K562 (cell line): ENCODE measurements at regions of chr5 and their contacts with region 1.

Region 1: DNA sequence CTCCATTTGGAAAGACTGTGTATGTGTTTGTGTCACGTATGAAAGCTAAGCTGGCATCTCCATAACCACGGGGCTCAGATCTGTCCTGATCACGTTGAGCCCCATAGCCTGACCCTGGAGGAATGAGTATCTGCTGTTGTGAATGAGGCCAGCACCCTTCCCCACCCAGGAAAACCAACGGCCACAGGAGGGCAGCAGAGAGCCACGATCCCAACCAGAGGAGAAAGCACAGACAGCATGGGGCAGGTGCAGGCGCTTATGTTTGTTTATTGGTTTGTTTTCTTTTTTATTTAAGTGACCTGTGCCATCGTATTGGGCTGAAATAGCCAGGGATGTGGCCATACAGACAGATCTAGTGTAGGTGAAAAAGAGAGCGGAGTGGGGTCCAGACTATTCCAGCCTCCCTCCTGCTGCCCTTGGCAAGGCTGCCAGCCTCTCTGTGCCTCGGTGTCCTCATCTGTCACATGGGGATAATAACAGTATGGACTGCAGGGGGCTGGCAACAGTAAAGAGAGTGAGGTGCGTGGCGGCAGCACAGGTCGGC is 12.0 kb downstream of the OR2V2 start:
- DNase-seq: peak; percentile 83 to 94 (median 84)
- ATAC-seq: peak; percentile 90
- H3K4me3 ChIP-seq: no peak overlapping the region
- H3K27ac ChIP-seq: peak overlapping the region; percentile 98; the same call in 2 of the 3 replicates
- H3K4me1 ChIP-seq: peaks cover 36 to 41% of the 10 kb centered on the region in 2 experiments
- H3K27me3 ChIP-seq: no peaks in the 10 kb centered on the region
- CTCF ChIP-seq: peak; percentile 96 to 97 (median 96)
- EP300 ChIP-seq: peak; percentile 29; the same call in 1 of the 2 replicates
- POLR2A ChIP-seq: no peak
- RAD21 ChIP-seq: peak; percentile 87 to 91

Region 2: GRCh38 chr5:180784497-180785097 is 374.8 kb before region 1 on chr5:
- CTCF ChIA-PET with region 1: no interaction called
- POLR2A ChIA-PET with region 1: interaction called, 4 read pairs
- in situ Hi-C with region 1: no loop called
- intact Hi-C with region 1: loop called (anchors 2 kb)
- DNase-seq: peak; percentile 54 to 85 (median 63)
- ATAC-seq: peak; percentile 72
- H3K4me3 ChIP-seq: no peak overlapping the region
- H3K27ac ChIP-seq: no peak overlapping the region
- H3K4me1 ChIP-seq: peaks cover 38% of the 10 kb centered on the region in 2 experiments; a peak in 4 of 5 replicates
- H3K27me3 ChIP-seq: no peaks in the 10 kb centered on the region
- CTCF ChIP-seq: peak; percentile 75 to 83 (median 76)
- EP300 ChIP-seq: no peak
- POLR2A ChIP-seq: no peak
- RAD21 ChIP-seq: peak; percentile 64 to 83

Region 3: DNA sequence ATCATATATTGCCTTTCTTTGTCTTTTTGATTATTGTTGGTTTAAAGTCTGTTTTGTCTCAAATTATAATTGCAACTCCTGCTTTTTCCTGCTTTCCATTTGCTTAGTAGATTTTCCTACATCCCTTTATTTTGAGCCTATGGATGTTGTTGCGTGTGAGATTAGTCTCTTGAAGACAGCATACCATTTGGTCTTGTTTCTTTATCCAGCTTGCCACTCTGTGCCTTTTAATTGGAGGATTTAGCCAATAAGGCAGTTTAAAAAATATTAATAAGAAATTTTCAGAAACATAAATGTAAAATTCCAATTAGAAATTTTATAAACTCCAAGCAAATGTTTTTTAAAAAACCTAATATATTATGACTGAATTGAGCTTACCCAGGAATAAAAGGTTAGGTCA is 236.4 kb before region 1 on chr5:
- CTCF ChIA-PET with region 1: no interaction called
- POLR2A ChIA-PET with region 1: no interaction called
- in situ Hi-C with region 1: no loop called
- intact Hi-C with region 1: no loop called
- DNase-seq: no peak
- ATAC-seq: no peak
- H3K4me3 ChIP-seq: no peak overlapping the region
- H3K27ac ChIP-seq: no peak overlapping the region
- H3K4me1 ChIP-seq: no peaks in the 10 kb centered on the region; a peak in 1 of 5 replicates
- H3K27me3 ChIP-seq: no peaks in the 10 kb centered on the region
- CTCF ChIP-seq: no peak
- EP300 ChIP-seq: no peak
- POLR2A ChIP-seq: no peak
- RAD21 ChIP-seq: no peak

Region 4: GRCh38 chr5:181043285-181044092 is 115.9 kb before region 1 on chr5:
- CTCF ChIA-PET with region 1: interaction called, 8 read pairs
- POLR2A ChIA-PET with region 1: no interaction called
- in situ Hi-C with region 1: no loop called
- intact Hi-C with region 1: loop called (anchors 5 kb)
- DNase-seq: peak; percentile 31 to 69 (median 52)
- ATAC-seq: peak; percentile 78
- H3K4me3 ChIP-seq: no peak overlapping the region
- H3K27ac ChIP-seq: no peak overlapping the region
- H3K4me1 ChIP-seq: peaks cover 9 to 29% of the 10 kb centered on the region in 2 experiments; a peak in 4 of 5 replicates
- H3K27me3 ChIP-seq: peaks cover 0 to 4% of the 10 kb centered on the region in 2 experiments; a peak in 2 of 5 replicates
- CTCF ChIP-seq: peak; percentile 68 to 81 (median 76); a peak in 5 of 6 replicates
- EP300 ChIP-seq: no peak
- POLR2A ChIP-seq: no peak
- RAD21 ChIP-seq: peak; percentile 53 to 86

Region 5: DNA sequence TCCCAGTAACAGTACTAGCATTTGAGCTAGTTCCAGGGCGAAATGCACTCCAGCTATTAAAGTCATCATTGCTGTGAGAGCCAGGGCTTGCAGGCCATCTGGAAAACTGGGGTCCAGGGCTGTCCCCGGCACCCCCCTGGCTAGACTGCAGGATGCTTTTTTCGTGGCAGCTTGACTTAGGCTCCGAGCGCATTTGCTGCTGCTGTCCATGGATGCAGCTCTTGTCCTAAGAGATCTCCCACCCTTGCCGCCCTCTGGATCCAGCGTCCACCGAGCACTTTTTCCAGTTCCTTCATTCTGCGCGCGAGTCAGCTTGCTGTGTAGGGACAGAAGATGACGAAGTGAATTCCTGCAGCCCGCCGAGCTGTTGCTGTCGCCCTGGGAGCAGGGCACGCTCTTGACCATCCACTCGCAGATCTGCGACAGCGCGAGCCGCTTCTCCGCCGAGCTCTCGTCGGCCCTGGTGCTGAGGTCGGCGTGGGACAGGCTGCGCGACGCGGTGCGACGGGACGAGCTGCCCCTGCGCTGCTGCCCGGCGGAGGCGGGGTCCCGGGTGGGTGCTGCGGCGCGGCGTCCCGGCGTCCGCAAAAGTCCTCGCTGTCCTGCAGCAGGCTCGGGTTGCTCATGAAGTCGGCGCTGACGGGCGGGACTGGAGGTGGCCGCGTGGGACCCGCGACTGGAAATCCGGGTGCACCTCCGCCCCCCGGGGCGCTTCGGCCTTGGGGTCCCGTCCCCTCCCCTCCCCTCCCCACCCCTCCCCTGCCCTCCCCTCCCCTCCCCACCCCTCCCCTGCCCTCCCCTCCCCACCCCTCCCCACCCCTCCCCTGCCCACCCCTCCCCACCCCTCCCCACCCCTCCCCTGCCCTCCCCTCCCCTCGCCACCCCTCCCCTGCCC is 59.0 kb before region 1 on chr5:
- CTCF ChIA-PET with region 1: no interaction called
- POLR2A ChIA-PET with region 1: interaction called, 3 read pairs
- in situ Hi-C with region 1: no loop called
- intact Hi-C with region 1: loop called (anchors 10 kb)
- DNase-seq: peak in 3 of 4 experiments; percentile 34 to 68 (median 37)
- ATAC-seq: no peak
- H3K4me3 ChIP-seq: peak overlapping the region; percentile 39
- H3K27ac ChIP-seq: peak overlapping the region; percentile 65; the same call in 1 of the 3 replicates
- H3K4me1 ChIP-seq: peaks cover 7 to 32% of the 10 kb centered on the region in 2 experiments
- H3K27me3 ChIP-seq: no peaks in the 10 kb centered on the region
- CTCF ChIP-seq: no peak
- EP300 ChIP-seq: no peak
- POLR2A ChIP-seq: no peak
- RAD21 ChIP-seq: no peak

Region 6: GRCh38 chr5:181181650-181182565 is 22.6 kb after region 1 on chr5:
- CTCF ChIA-PET with region 1: interaction called, 6 read pairs
- POLR2A ChIA-PET with region 1: interaction called, 8 read pairs
- in situ Hi-C with region 1: no loop called
- intact Hi-C with region 1: loop called (anchors 2 kb)
- DNase-seq: peak in 2 of 4 experiments; percentile 28 to 76
- ATAC-seq: peak; percentile 69
- H3K4me3 ChIP-seq: no peak overlapping the region
- H3K27ac ChIP-seq: no peak overlapping the region
- H3K4me1 ChIP-seq: peaks cover 19 to 39% of the 10 kb centered on the region in 2 experiments
- H3K27me3 ChIP-seq: no peaks in the 10 kb centered on the region
- CTCF ChIP-seq: peak; percentile 76 to 87 (median 79)
- EP300 ChIP-seq: no peak
- POLR2A ChIP-seq: no peak
- RAD21 ChIP-seq: peak; percentile 74 to 88

Region 7: GRCh38 chr5:181260387-181261319 is 101.3 kb after region 1 on chr5 and contains the start of gene TRIM52:
- CTCF ChIA-PET with region 1: no interaction called
- POLR2A ChIA-PET with region 1: no interaction called
- in situ Hi-C with region 1: no loop called
- intact Hi-C with region 1: no loop called
- DNase-seq: peak; percentile 77 to 94 (median 82)
- ATAC-seq: peak; percentile 88
- H3K4me3 ChIP-seq: peak within 1 kb of the TSS; percentile 98
- H3K27ac ChIP-seq: peak within 1 kb of the TSS; percentile 99
- H3K4me1 ChIP-seq: peaks cover 21 to 29% of the 10 kb centered on the region in 2 experiments; a peak in 4 of 5 replicates
- H3K27me3 ChIP-seq: no peaks in the 10 kb centered on the region
- CTCF ChIP-seq: no peak
- EP300 ChIP-seq: 0 out of 2 replicates have a peak, but pooled peaks have one; percentile 16
- POLR2A ChIP-seq: peak; percentile 76
- RAD21 ChIP-seq: peak in 1 of 2 experiments; percentile 23; a peak in 1 of 4 replicates
- polyA plus RNA-seq, gene TRIM52: 3.3 to 3.7 TPM